ENCODE measurements at regions of chr11 and their contacts with region 1.

Region 1: DNA sequence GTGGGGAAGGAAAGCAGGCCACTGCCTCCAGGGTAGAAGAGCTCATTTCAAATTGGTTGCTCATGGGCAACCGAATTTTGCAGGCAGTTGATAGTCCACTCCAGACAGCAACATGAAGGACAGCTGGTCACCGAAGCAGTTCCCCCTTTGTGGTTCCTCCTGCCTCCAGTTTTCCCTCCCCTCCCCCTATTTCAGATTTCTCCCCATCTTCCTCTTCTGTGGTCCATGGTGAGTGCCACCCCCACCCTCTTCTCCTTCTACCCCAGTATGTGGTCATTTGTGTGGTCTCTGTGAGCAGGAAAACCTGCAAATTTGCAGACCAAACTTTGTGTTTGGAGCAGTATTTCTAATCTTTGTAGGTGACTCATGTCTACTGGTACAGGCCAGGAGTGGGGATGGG is 38.2 kb upstream of the PAK1 start:
- DNase-seq: no peak
- H3K4me3 ChIP-seq: no peak overlapping the region
- H3K27ac ChIP-seq: no peak overlapping the region
- H3K4me1 ChIP-seq: peaks cover 10% of the 10 kb centered on the region
- H3K27me3 ChIP-seq: peaks cover 0 to 2% of the 10 kb centered on the region in 2 experiments
- CTCF ChIP-seq: no peak
- POLR2A ChIP-seq: no peak

Region 2: DNA sequence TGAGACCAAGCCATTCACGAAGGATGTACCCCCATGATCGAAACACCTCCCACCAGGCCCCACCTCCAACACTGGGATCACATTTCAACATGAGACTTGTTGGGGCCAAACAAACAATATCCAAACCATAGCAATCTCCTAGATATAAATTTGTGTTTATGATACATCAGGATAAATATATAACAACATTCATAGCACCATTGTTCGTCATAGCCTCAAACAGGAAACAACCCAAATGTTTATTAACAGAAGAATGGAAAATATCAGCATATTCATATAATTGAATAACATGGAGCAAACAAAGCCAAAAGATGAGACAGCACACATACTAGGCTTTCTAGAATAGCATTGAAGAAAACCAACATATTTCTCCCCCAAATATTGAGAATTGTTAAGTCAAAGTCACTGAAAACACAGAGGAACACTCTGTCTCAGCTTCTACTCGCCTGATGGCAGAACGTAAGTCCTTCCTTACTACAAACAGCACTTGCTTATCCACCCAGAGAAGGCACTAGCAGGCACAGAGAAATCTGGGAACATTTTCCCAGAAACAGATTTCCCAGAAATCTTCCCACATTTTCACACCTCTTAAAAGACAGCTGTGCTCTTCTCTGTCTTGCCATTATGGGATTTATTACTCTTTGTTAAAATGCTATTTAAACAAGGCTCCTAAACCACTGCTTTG is 202.5 kb before region 1 on chr11:
- CTCF ChIA-PET with region 1: no interaction called
- POLR2A ChIA-PET with region 1: interaction called, 11 read pairs
- dilution Hi-C with region 1: no loop called
- intact Hi-C with region 1: no loop called
- DNase-seq: no peak
- H3K4me3 ChIP-seq: no peak overlapping the region
- H3K27ac ChIP-seq: no peak overlapping the region
- H3K4me1 ChIP-seq: no peaks in the 10 kb centered on the region
- H3K27me3 ChIP-seq: peaks cover 0 to 2% of the 10 kb centered on the region in 2 experiments
- CTCF ChIP-seq: no peak
- POLR2A ChIP-seq: no peak

Region 3: DNA sequence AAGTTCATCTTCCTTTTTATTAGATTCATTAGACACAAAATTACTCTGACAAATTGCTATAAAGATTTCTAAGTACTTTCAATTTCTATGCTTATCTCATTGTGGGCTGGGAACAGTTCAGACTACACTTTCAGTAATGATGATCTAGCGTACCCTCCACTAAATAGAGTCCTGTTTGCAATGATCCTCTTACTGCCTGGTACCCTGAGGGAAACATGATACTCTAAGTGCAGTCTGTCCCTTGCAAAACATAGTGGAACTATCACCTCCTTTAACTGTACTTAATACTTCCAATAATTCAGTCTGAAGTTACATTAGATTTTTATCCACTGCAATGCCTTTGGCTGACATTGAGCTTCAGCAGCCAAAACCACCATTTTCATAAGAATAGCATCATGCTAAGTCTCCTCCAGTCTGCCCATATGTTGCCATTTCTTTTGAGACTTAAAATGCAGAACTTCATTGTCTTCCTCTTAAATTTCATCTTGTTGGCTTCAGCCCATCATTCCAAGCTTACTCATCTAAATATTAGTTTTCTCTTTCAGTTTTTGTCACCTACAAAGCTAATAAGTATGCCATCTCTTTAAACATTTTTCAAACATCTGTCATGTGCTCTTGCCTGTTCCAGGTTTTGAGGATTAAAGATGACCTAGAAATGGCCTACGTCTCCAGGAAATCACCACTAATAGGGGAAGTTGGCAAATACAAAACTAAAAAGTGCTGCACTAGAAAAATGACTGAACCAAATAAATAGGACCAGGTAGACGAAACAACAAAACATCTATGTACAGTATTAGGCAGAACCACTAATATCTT is 93.7 kb before region 1 on chr11:
- CTCF ChIA-PET with region 1: no interaction called
- POLR2A ChIA-PET with region 1: no interaction called
- dilution Hi-C with region 1: no loop called
- intact Hi-C with region 1: no loop called
- DNase-seq: no peak
- H3K4me3 ChIP-seq: no peak overlapping the region
- H3K27ac ChIP-seq: no peak overlapping the region
- H3K4me1 ChIP-seq: no peaks in the 10 kb centered on the region
- H3K27me3 ChIP-seq: peaks cover 0 to 3% of the 10 kb centered on the region in 2 experiments
- CTCF ChIP-seq: no peak
- POLR2A ChIP-seq: no peak

Region 4: DNA sequence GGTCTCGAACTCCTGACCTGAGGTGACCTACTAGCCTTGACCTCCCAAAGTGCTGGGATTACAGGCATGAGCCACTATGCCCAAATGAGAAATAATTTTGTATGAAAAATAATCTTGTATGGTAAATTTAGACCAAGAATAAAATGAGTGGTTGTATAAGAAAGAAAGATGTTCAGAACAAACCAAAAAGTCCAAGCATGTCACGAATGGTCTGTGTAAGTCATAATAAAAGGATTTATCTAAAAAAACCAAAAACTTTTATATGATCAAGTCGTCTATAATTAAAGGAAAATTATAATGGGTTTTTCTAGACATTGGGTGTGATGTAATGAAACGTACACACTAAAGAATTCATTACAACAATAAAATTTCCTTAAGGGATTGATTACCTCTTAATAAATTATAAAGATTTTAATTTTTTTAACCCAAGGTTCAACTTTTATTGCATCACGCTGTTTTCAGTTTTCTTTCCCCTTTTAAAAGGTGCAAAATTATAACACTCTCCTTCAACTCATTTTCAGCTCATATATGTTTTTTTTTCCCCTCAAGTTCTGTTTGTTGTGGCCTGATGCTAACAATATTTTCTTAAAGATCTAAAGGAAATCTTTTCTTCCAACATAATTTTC is 68.7 kb after region 1 on chr11:
- CTCF ChIA-PET with region 1: no interaction called
- POLR2A ChIA-PET with region 1: no interaction called
- dilution Hi-C with region 1: no loop called
- intact Hi-C with region 1: no loop called
- DNase-seq: no peak
- H3K4me3 ChIP-seq: no peak overlapping the region
- H3K27ac ChIP-seq: no peak overlapping the region
- H3K4me1 ChIP-seq: no peaks in the 10 kb centered on the region
- H3K27me3 ChIP-seq: no peaks in the 10 kb centered on the region
- CTCF ChIP-seq: no peak
- POLR2A ChIP-seq: no peak

Measured in endothelial cell of umbilical vein (primary cell).